ENCODE measurements at regions of chr15 and their contacts with region 1.

Region 1: GRCh38 chr15:45030743-45031142 is 7.7 kb downstream of the SORD start:
- DNase-seq: no peak
- ATAC-seq: no peak
- H3K4me3 ChIP-seq: no peak overlapping the region
- H3K27ac ChIP-seq: no peak overlapping the region
- H3K4me1 ChIP-seq: peaks cover 0 to 13% (median 0%) of the 10 kb centered on the region in 9 donors
- H3K27me3 ChIP-seq: no peaks in the 10 kb centered on the region
- CTCF ChIP-seq: no peak

Region 2: DNA sequence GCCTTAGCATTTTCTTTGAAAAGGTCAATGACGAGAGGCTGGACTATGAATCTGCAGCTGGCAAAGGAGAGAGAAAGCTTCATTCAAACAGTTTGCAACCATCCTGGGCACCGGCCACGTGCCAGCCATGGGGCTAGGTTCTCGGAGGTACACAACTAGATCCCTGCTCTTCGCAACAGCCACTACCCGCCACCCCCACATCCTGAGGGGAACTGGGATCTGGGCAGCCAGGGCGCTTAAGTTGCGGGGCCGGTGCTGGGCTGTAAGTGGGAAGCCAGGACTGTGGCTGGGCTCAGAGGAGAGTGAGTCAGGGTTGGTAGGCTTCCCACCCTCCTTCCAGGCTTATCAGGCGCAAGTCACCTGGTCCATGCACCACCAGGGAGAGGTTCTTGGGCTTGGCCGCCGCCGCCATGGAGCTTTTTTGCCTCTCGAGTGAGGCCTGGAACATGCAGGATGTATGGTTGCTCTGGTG is 169.3 kb before region 1 on chr15:
- intact Hi-C with region 1: loop called in 1 of 10 experiments (anchors 10 kb)
- DNase-seq: peak in 1 of 2 donors; percentile 8
- ATAC-seq: no peak
- H3K4me3 ChIP-seq: no peak overlapping the region
- H3K27ac ChIP-seq: no peak overlapping the region
- H3K4me1 ChIP-seq: no peaks in the 10 kb centered on the region
- H3K27me3 ChIP-seq: peaks cover 0 to 7% (median 0%) of the 10 kb centered on the region in 7 donors
- CTCF ChIP-seq: no peak

Region 3: DNA sequence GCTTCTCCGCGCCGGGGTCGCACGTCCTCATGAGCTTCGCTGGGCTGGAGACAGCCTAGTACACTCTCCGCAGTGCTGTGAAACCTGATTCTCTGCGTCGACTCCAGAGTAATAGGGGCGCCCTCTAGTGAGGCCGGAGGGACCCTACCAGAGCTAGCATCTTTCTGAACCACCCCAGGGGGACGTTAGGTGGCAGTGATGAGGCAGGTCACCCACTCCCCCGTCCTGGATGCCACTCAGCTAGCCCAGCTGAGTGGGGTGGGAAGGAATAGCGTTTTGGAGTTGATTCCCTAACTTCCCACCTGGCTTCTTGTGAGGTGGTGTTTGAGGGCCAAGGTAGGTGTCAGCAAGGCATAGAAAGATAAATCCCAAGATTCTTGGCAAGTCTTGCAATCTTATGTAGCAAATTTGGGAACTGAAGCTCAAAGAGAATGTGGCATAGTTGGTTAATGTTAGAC is 87.4 kb after region 1 on chr15:
- intact Hi-C with region 1: loop called in 1 of 10 experiments (anchors 10 kb)
- DNase-seq: peak; percentile 81 to 89
- ATAC-seq: peak; percentile 93 to 97 (median 96)
- H3K4me3 ChIP-seq: peak overlapping the region in 8 of 10 donors; percentile 16 to 44 (median 34)
- H3K27ac ChIP-seq: no peak overlapping the region
- H3K4me1 ChIP-seq: peaks cover 8 to 35% (median 15%) of the 10 kb centered on the region in 9 donors
- H3K27me3 ChIP-seq: peaks cover 22 to 94% (median 80%) of the 10 kb centered on the region in 7 donors
- CTCF ChIP-seq: peak; percentile 90 to 100 (median 99)

Measured in heart right ventricle (tissue), 16 donors.